CD8-positive, alpha-beta T cell (primary cell): ENCODE measurements at regions of chr19 and their contacts with region 1.

Region 1: DNA sequence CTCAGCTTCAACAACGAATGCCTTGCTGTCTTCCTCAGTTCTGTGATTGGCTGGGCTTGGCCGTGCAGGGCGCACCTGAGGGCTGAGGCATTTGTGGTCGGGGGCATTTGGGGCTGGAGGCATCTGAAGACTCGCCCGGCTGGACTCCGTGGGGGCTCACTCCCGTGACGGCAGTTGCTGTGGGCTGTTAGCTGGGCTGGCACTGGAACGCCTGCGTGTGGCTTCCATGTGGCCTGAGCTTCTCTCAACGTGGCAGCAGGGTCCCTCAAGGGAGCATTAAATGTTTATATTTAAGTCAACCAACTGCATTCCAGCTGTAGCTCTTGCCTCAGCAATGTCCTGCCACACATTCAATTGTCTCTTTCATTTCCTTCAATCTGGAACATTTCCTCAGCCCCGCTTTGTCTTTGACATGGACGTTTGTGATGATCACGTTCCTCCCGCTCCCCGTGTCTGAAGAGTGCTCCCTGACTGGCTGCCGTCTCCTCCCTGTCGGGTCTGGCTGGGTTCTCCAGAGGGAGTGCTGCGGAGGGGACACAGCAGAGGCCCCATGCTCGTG is 21.0 kb downstream of the CCDC8 start:
- DNase-seq: no peak
- ATAC-seq: no peak
- H3K4me3 ChIP-seq: no peak overlapping the region
- H3K4me3 Mint-ChIP-seq: no peak overlapping the region
- H3K27ac ChIP-seq: no peak overlapping the region
- H3K27ac Mint-ChIP-seq: no peak overlapping the region
- H3K4me1 ChIP-seq: no peaks in the 10 kb centered on the region
- H3K4me1 Mint-ChIP-seq: peaks cover 9% of the 10 kb centered on the region
- H3K27me3 ChIP-seq: no peaks in the 10 kb centered on the region
- H3K27me3 Mint-ChIP-seq: no peaks in the 10 kb centered on the region
- CTCF ChIP-seq: no peak

Region 2: DNA sequence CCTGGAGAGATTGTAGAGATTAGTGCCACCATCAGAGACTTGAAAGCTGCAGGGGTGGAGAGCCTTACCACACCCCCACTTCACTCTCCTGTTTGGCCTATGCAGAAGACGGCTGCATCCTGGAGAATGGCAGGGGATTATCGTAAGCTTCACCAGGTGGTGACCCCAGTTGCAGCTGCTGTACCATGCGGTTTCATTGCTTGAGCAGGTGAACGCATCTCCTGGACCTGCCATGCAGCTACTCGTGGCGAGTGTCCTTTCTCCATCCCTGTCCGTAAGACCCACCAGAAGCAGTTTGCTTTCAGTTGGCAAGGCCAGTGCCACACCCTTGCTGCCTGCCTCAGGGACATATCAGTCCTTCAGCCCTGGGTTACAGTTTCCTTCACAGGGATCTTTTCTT is 24.2 kb before region 1 on chr19:
- CTCF ChIA-PET with region 1: interaction called, 15 read pairs
- POLR2A ChIA-PET with region 1: no interaction called
- intact Hi-C with region 1: no loop called
- DNase-seq: no peak
- ATAC-seq: no peak
- H3K4me3 ChIP-seq: no peak overlapping the region
- H3K4me3 Mint-ChIP-seq: no peak overlapping the region
- H3K27ac ChIP-seq: no peak overlapping the region
- H3K27ac Mint-ChIP-seq: no peak overlapping the region
- H3K4me1 ChIP-seq: peaks cover 11% of the 10 kb centered on the region
- H3K4me1 Mint-ChIP-seq: peaks cover 47% of the 10 kb centered on the region
- H3K27me3 ChIP-seq: no peaks in the 10 kb centered on the region
- H3K27me3 Mint-ChIP-seq: no peaks in the 10 kb centered on the region
- CTCF ChIP-seq: no peak

Region 3: GRCh38 chr19:46478356-46478986 is 86.1 kb after region 1 on chr19:
- CTCF ChIA-PET with region 1: interaction called, 16 read pairs
- POLR2A ChIA-PET with region 1: no interaction called
- intact Hi-C with region 1: no loop called
- DNase-seq: peak in 1 of 9 experiments; percentile 61
- ATAC-seq: peak; percentile 14
- H3K4me3 ChIP-seq: no peak overlapping the region
- H3K4me3 Mint-ChIP-seq: no peak overlapping the region
- H3K27ac ChIP-seq: no peak overlapping the region
- H3K27ac Mint-ChIP-seq: peak overlapping the region; percentile 55
- H3K4me1 ChIP-seq: no peaks in the 10 kb centered on the region
- H3K4me1 Mint-ChIP-seq: peaks cover 2% of the 10 kb centered on the region
- H3K27me3 ChIP-seq: peaks cover 0 to 3% of the 10 kb centered on the region in 2 experiments
- H3K27me3 Mint-ChIP-seq: peaks cover 39% of the 10 kb centered on the region
- CTCF ChIP-seq: no peak

Region 4: GRCh38 chr19:46513461-46514236 is 121.3 kb after region 1 on chr19:
- CTCF ChIA-PET with region 1: interaction called, 16 read pairs
- POLR2A ChIA-PET with region 1: no interaction called
- intact Hi-C with region 1: loop called (anchors 1 kb)
- DNase-seq: peak; percentile 63 to 88 (median 78)
- ATAC-seq: peak; percentile 73
- H3K4me3 ChIP-seq: no peak overlapping the region
- H3K4me3 Mint-ChIP-seq: no peak overlapping the region
- H3K27ac ChIP-seq: no peak overlapping the region
- H3K27ac Mint-ChIP-seq: no peak overlapping the region
- H3K4me1 ChIP-seq: peaks cover 17% of the 10 kb centered on the region
- H3K4me1 Mint-ChIP-seq: peaks cover 14% of the 10 kb centered on the region
- H3K27me3 ChIP-seq: peaks cover 0 to 4% of the 10 kb centered on the region in 2 experiments
- H3K27me3 Mint-ChIP-seq: peaks cover 20% of the 10 kb centered on the region
- CTCF ChIP-seq: peak; percentile 94